Activated CD4-positive, alpha-beta memory T cell treated with anti-CD3 and anti-CD28 coated beads, Interleukin-2, amount 10 ng/mL, durations not matched to agents 7 days and 5 days (primary cell): ENCODE measurements at regions of chr3 and their contacts with region 1.

Region 1: GRCh38 chr3:196568246-196569002 is at the starts of genes FBXO45 and WDR53:
- DNase-seq: peak; percentile 97
- H3K4me3 Mint-ChIP-seq: peak within 1 kb of the TSS; percentile 97
- H3K27ac Mint-ChIP-seq: peak within 1 kb of the TSS; percentile 95
- H3K4me1 Mint-ChIP-seq: peaks cover 54% of the 10 kb centered on the region
- H3K27me3 Mint-ChIP-seq: no peaks in the 10 kb centered on the region
- total RNA-seq, gene FBXO45: 19.7 TPM
- total RNA-seq, gene WDR53: 27.2 to 29.3 TPM

Region 2: DNA sequence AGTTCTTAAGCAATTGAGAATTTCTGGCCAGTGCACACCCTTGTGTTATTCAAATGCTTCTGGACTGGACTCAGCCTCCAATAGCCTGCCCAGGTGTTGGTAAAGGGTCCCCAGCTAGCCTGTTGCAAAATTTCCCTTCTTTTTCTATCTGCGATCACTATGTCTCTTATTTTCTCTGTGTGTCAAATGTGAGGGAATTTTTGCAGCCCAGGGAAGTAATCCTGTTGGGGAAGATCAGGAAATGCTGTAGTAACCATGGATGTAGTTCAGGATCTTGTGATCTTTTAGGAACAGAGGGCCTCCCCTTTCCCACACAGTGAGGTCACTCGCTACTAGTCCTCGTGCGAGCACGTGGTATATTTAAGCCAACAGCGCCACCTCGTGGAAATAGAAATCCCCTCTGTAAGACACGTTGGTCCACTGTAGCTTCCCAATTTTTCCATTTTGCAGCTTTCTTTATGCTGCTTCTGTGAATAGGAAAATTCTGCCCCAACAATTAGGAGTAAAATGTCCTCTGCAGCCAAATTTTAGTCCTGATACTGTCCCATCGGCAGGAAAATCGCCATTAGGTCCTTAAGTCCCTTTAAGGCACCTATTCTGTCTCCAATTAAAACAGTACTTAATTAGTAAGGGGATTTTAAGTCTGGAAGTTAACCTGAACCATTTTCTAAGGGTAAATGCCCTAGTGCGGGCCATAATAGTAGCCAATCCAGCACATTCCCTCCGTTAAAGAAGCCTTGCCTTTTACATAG is 49.3 kb before region 1 on chr3:
- CTCF ChIA-PET with region 1: interaction called, 10 read pairs
- POLR2A ChIA-PET with region 1: interaction called, 4 read pairs
- DNase-seq: peak; percentile 71
- H3K4me3 Mint-ChIP-seq: no peak overlapping the region
- H3K27ac Mint-ChIP-seq: no peak overlapping the region
- H3K4me1 Mint-ChIP-seq: peaks cover 2% of the 10 kb centered on the region
- H3K27me3 Mint-ChIP-seq: peaks cover 2% of the 10 kb centered on the region

Region 3: DNA sequence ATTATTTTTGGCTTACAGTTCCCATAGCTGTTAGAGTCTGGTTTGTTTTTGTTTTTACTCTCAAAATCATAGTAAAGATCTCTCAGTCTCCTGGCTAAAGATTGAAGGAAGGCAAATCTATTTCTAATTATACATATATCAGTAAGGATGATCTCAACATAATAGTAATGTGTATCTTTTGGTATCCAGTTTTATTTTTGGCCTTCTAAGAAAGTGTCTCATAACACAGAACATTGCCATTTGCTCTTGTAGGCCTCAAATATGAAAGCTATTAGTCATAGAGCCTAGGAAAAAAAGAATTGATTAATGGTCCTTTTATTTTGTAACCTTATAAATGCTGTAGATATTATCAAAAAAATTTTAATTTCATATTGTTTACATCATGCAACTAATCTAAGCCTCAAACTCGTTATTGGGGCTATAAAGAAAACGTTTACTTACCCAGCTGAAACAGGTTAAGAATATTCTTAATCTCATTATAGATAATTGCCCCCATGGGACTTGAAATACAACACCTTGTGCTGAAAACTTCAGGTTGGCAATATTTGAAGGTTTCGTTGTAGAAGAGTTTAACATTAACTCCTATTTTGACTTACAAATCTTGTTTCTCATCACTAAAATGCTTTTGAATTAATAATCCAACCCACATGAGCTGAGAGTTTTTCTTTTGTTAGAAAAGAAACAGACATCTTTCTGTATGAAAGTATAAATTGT is 16.8 kb after region 1 on chr3:
- CTCF ChIA-PET with region 1: interaction called, 4 read pairs
- POLR2A ChIA-PET with region 1: interaction called, 10 read pairs
- DNase-seq: no peak
- H3K4me3 Mint-ChIP-seq: no peak overlapping the region
- H3K27ac Mint-ChIP-seq: no peak overlapping the region
- H3K4me1 Mint-ChIP-seq: peaks cover 17% of the 10 kb centered on the region
- H3K27me3 Mint-ChIP-seq: no peaks in the 10 kb centered on the region

Region 4: GRCh38 chr3:196632046-196632751 is 63.8 kb after region 1 on chr3:
- CTCF ChIA-PET with region 1: interaction called, 4 read pairs
- POLR2A ChIA-PET with region 1: interaction called, 18 read pairs
- DNase-seq: peak; percentile 97
- H3K4me3 Mint-ChIP-seq: peak overlapping the region; percentile 97
- H3K27ac Mint-ChIP-seq: peak overlapping the region; percentile 98
- H3K4me1 Mint-ChIP-seq: peaks cover 65% of the 10 kb centered on the region
- H3K27me3 Mint-ChIP-seq: no peaks in the 10 kb centered on the region

Region 5: DNA sequence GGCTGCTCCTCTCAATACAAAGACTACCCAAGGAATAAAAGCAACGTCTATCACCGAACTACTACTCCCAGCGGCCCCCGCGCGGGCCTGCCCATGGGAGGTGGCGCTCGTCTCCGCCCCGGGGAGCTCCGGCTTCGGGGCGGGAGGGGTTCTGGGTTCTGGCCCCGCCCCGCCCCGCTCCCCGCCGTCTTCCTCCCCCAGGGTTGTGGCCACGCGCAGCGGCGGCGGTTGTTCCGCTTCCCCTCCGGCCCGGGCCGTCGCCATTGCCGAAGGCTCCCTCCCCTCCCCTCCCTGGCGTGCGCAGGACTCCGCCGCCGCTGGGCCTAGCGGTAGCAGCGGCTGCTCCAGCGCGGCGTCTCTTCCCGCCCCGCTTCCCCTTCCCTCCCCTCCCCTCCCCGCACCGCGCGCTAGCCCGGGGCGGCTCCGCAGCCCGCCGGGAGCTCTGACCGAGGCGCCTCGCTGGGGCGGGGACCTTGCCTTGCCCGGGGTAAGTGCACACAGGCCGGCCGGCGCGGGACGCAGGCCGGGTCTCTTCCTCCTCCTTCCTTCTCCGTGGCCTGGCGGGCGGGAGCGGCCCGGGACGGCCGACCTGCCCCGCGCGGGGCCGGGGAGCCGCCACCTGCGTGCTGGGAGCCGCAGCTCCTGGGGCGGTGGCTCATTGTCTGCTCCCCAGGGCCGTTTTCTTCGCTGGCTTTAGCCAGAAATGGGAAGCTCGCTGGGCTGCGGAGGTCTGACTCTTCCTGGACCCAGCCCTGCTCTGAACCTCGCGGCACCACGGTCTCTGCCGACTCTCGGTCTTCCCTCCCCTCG is 171.5 kb after region 1 on chr3 and contains the start of gene PAK2:
- CTCF ChIA-PET with region 1: interaction called, 3 read pairs
- POLR2A ChIA-PET with region 1: interaction called, 16 read pairs
- DNase-seq: peak; percentile 91
- H3K4me3 Mint-ChIP-seq: peak within 1 kb of the TSS; percentile 99
- H3K27ac Mint-ChIP-seq: peak within 1 kb of the TSS; percentile 98
- H3K4me1 Mint-ChIP-seq: peaks cover 28% of the 10 kb centered on the region
- H3K27me3 Mint-ChIP-seq: no peaks in the 10 kb centered on the region
- total RNA-seq, gene PAK2: 118 to 119 TPM